Caco-2 (cell line): ENCODE measurements at regions of chr20 and their contacts with region 1.

Region 1: DNA sequence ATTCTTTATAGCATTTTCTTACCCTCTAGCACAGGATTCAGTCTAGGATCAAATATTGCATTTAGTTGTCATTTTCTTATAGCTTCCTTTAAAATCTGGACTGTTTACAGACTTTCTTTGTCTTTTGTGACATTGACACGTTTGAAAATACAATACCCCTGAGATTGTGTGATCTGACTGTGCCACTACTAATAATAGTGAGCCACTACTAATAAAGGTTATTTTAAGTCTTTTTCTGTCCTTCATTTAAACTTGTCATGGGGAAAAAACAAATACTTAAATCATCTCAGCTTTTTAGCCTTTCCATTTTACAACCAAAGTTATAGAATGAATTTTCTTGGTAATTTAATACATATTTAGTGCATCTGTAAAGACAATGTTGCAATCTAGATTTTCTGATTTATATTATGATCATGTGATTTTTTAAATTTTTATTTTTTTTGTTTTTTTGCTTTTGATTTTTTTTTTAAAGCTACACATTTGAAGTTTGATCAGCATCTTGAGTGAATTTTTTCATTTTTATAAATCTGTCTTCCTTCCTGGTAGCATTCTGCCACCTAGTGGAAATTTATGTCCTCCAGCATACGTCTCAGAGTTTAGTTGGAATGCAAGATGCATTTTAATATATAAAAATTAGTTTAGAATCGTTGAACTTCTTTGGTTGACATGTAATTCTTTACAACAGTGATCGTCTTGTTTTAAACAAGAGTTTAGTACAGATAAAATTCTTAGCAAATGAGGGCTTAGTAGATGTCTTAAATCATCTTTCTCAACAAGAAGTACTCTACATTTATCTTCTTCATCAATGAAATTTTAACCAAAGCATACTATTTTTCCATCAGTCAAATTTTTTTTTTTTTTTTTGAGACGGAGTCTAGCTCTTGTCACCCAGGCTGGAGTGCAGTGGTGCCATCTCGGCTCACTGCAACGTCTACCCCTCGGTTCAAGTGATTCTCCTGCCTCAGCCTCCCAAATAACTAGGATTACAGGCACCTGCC is 119.4 kb downstream of the NCOA3 start:
- DNase-seq: peak in 1 of 2 experiments; percentile 69
- H3K4me3 ChIP-seq: no peak overlapping the region
- H3K4me3 Mint-ChIP-seq: no peak overlapping the region
- H3K27ac Mint-ChIP-seq: peak overlapping the region; percentile 4
- H3K4me1 ChIP-seq: 0 out of 2 replicates have a peak, but pooled peaks cover 6% of the 10 kb centered on the region
- H3K4me1 Mint-ChIP-seq: peaks cover 16% of the 10 kb centered on the region
- H3K27me3 ChIP-seq: no peaks in the 10 kb centered on the region
- H3K27me3 Mint-ChIP-seq: no peaks in the 10 kb centered on the region
- CTCF ChIP-seq: peak; percentile 95 to 97

Region 2: DNA sequence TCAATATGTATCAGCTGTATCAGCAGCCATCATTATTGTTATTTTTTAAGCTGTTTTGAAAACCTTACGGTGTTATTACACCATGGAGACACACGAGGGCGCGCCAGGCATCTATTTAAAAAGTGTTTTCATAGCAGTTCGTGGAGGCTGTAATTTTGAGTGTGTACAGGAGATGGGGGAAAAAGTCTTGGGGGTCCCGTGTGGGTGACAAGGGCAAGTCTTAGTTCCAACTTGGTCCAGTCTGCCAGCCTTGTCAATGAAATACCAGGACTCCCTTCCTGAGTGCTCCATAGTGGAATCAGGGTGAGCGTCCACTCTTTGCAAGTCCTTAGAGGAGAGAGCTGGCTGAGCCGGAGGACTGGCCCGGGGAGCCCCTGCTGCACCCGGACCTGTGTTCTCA is 868.4 kb before region 1 on chr20:
- CTCF ChIA-PET with region 1: no interaction called
- POLR2A ChIA-PET with region 1: no interaction called
- intact Hi-C with region 1: loop called (anchors 2 kb)
- DNase-seq: peak; percentile 77 to 81
- H3K4me3 ChIP-seq: no peak overlapping the region
- H3K4me3 Mint-ChIP-seq: no peak overlapping the region
- H3K27ac Mint-ChIP-seq: no peak overlapping the region
- H3K4me1 ChIP-seq: 0 out of 2 replicates have a peak, but pooled peaks cover under 1% of the 10 kb centered on the region
- H3K4me1 Mint-ChIP-seq: peaks cover 7% of the 10 kb centered on the region
- H3K27me3 ChIP-seq: no peaks in the 10 kb centered on the region
- H3K27me3 Mint-ChIP-seq: peaks cover 21% of the 10 kb centered on the region
- CTCF ChIP-seq: peak; percentile 90 to 94

Region 3: GRCh38 chr20:47196091-47197081 is 424.7 kb before region 1 on chr20:
- CTCF ChIA-PET with region 1: interaction called, 6 read pairs
- POLR2A ChIA-PET with region 1: no interaction called
- intact Hi-C with region 1: loop called (anchors 5 kb)
- DNase-seq: peak; percentile 90 to 95
- H3K4me3 ChIP-seq: no peak overlapping the region
- H3K4me3 Mint-ChIP-seq: peak overlapping the region; percentile 1
- H3K27ac Mint-ChIP-seq: peak overlapping the region; percentile 44
- H3K4me1 ChIP-seq: peaks cover 25% of the 10 kb centered on the region
- H3K4me1 Mint-ChIP-seq: peaks cover 27% of the 10 kb centered on the region
- H3K27me3 ChIP-seq: no peaks in the 10 kb centered on the region
- H3K27me3 Mint-ChIP-seq: no peaks in the 10 kb centered on the region
- CTCF ChIP-seq: peak; percentile 100

Region 4: GRCh38 chr20:47220161-47220582 is 400.9 kb before region 1 on chr20:
- CTCF ChIA-PET with region 1: no interaction called
- POLR2A ChIA-PET with region 1: no interaction called
- intact Hi-C with region 1: loop called (anchors 1 kb)
- DNase-seq: peak; percentile 72 to 81
- H3K4me3 ChIP-seq: no peak overlapping the region
- H3K4me3 Mint-ChIP-seq: no peak overlapping the region
- H3K27ac Mint-ChIP-seq: no peak overlapping the region
- H3K4me1 ChIP-seq: no peaks in the 10 kb centered on the region
- H3K4me1 Mint-ChIP-seq: peaks cover 9% of the 10 kb centered on the region
- H3K27me3 ChIP-seq: no peaks in the 10 kb centered on the region
- H3K27me3 Mint-ChIP-seq: no peaks in the 10 kb centered on the region
- CTCF ChIP-seq: peak; percentile 85 to 93

Region 5: DNA sequence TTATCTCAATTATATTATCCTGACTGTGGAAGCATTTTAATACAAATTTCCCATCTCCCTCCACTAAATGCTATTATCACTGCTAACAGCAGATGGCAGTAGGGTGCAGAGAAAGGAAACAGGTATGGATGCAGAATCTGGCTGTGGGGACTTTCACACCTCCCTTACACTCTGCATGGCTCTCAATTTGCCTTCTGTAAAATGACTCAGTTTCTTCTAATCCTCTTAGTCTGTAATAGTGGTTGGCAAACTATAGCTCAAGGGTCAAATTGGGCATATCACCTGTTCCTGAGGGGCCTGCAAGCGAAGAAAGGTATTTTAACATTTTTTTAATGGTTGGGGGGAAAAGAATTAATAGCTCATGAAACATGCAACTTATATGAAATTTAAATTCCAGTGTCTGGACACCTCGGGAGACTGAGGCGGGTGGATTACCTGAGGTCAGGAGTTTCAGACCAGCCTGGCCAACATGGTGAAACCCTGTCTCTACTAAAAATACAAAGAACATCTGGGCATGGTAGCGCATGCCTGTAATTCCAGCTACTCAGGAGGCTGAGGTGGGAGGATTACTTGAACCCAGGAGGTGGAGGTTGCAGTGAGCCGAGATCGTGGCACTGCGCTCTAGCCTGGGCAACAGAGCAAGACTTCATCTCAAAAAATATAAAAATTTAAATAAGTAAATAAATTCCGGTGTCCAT is 348.1 kb before region 1 on chr20:
- CTCF ChIA-PET with region 1: no interaction called
- POLR2A ChIA-PET with region 1: no interaction called
- intact Hi-C with region 1: loop called (anchors 1 kb)
- DNase-seq: peak; percentile 72 to 89
- H3K4me3 ChIP-seq: no peak overlapping the region
- H3K4me3 Mint-ChIP-seq: no peak overlapping the region
- H3K27ac Mint-ChIP-seq: peak overlapping the region; percentile 11
- H3K4me1 ChIP-seq: peaks cover 7% of the 10 kb centered on the region
- H3K4me1 Mint-ChIP-seq: peaks cover 16% of the 10 kb centered on the region
- H3K27me3 ChIP-seq: no peaks in the 10 kb centered on the region
- H3K27me3 Mint-ChIP-seq: no peaks in the 10 kb centered on the region
- CTCF ChIP-seq: peak; percentile 98

Region 6: GRCh38 chr20:47610247-47610944 is 10.7 kb before region 1 on chr20:
- CTCF ChIA-PET with region 1: no interaction called
- POLR2A ChIA-PET with region 1: no interaction called
- intact Hi-C with region 1: no loop called
- DNase-seq: no peak
- H3K4me3 ChIP-seq: no peak overlapping the region
- H3K4me3 Mint-ChIP-seq: no peak overlapping the region
- H3K27ac Mint-ChIP-seq: no peak overlapping the region
- H3K4me1 ChIP-seq: peaks cover 5% of the 10 kb centered on the region
- H3K4me1 Mint-ChIP-seq: peaks cover 8% of the 10 kb centered on the region
- H3K27me3 ChIP-seq: no peaks in the 10 kb centered on the region
- H3K27me3 Mint-ChIP-seq: no peaks in the 10 kb centered on the region
- CTCF ChIP-seq: no peak

Region 7: GRCh38 chr20:47642624-47643023 is 21.5 kb after region 1 on chr20:
- CTCF ChIA-PET with region 1: no interaction called
- POLR2A ChIA-PET with region 1: interaction called, 13 read pairs
- intact Hi-C with region 1: no loop called
- DNase-seq: no peak
- H3K4me3 ChIP-seq: no peak overlapping the region
- H3K4me3 Mint-ChIP-seq: no peak overlapping the region
- H3K27ac Mint-ChIP-seq: peak overlapping the region; percentile 5
- H3K4me1 ChIP-seq: no peaks in the 10 kb centered on the region
- H3K4me1 Mint-ChIP-seq: peaks cover 9% of the 10 kb centered on the region
- H3K27me3 ChIP-seq: no peaks in the 10 kb centered on the region
- H3K27me3 Mint-ChIP-seq: no peaks in the 10 kb centered on the region
- CTCF ChIP-seq: no peak